HCT116 (cell line): ENCODE measurements at regions of chr1 and their contacts with region 1.

Region 1: GRCh38 chr1:10694633-10695627 is 101.5 kb downstream of the CASZ1 start:
- DNase-seq: peak; percentile 60
- ATAC-seq: peak; percentile 88
- H3K4me3 ChIP-seq: peak overlapping the region in 1 of 2 experiments; percentile 40; a peak in 1 of 4 replicates
- H3K27ac ChIP-seq: no peak overlapping the region; the same call in 1 of the 2 replicates
- H3K4me1 ChIP-seq: peaks cover 14 to 35% of the 10 kb centered on the region in 2 experiments
- H3K27me3 ChIP-seq: no peaks in the 10 kb centered on the region
- CTCF ChIP-seq: no peak
- POLR2A ChIP-seq: no peak
- RAD21 ChIP-seq: no peak

Region 2: GRCh38 chr1:10753299-10753698 is 58.4 kb after region 1 on chr1:
- CTCF ChIA-PET with region 1: no interaction called
- POLR2A ChIA-PET with region 1: no interaction called
- RAD21 ChIA-PET with region 1: no interaction called
- intact Hi-C with region 1: no loop called
- DNase-seq: no peak
- ATAC-seq: peak; percentile 44; the same call in 1 of the 2 replicates
- H3K4me3 ChIP-seq: no peak overlapping the region
- H3K27ac ChIP-seq: no peak overlapping the region
- H3K4me1 ChIP-seq: peaks cover 2 to 9% of the 10 kb centered on the region in 2 experiments; a peak in 2 of 4 replicates
- H3K27me3 ChIP-seq: no peaks in the 10 kb centered on the region
- CTCF ChIP-seq: peak in 1 of 3 experiments; percentile 26; a peak in 1 of 6 replicates
- POLR2A ChIP-seq: no peak
- RAD21 ChIP-seq: no peak

Region 3: GRCh38 chr1:10803971-10804820 is 109.3 kb after region 1 on chr1:
- CTCF ChIA-PET with region 1: no interaction called
- POLR2A ChIA-PET with region 1: no interaction called
- RAD21 ChIA-PET with region 1: no interaction called
- intact Hi-C with region 1: loop called (anchors 5 kb)
- DNase-seq: no peak
- ATAC-seq: peak; percentile 95
- H3K4me3 ChIP-seq: peak overlapping the region; percentile 43 to 50
- H3K27ac ChIP-seq: peak overlapping the region; percentile 73
- H3K4me1 ChIP-seq: peaks cover 9 to 17% of the 10 kb centered on the region in 2 experiments
- H3K27me3 ChIP-seq: peaks cover 7% of the 10 kb centered on the region; the same call in 1 of the 2 replicates
- CTCF ChIP-seq: no peak
- POLR2A ChIP-seq: peak; percentile 56
- RAD21 ChIP-seq: no peak

Region 4: DNA sequence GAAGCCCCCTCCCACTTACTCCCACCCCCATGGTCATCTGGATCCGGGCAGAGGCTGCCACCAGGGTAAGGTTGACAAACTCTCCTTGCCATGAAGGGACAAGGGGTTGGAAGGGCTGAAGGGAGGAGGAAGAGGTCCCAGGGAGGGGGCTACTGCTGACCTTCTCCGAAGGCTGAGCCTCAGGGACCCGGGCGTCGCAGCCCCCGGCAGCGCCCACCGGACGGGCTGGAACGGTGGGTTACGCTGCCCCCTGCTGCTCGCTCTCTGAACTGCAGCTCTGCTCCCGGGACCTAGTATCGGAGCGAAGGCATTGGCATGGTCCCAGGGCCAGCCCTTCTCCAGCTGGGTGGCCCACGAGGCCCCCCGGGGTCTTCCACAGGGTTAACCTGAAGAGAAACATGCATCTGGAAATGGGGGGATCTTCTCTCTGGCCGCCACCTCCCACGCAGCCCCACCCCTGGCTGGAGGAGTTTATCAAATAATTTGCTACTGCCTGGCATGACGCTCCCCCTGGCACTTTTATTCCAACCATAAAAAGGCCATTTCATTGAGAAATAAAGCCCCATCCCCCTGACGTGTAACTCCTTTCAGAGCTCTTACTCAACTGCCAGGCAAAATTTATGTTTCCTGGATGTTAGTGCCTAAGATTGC is 247.1 kb after region 1 on chr1:
- CTCF ChIA-PET with region 1: no interaction called
- POLR2A ChIA-PET with region 1: no interaction called
- RAD21 ChIA-PET with region 1: no interaction called
- intact Hi-C with region 1: loop called (anchors 1 kb)
- DNase-seq: no peak
- ATAC-seq: peak; percentile 83
- H3K4me3 ChIP-seq: 0 out of 4 replicates have a peak overlapping the region, but pooled peaks of 1 of the 2 experiments have one; percentile 26
- H3K27ac ChIP-seq: no peak overlapping the region
- H3K4me1 ChIP-seq: peaks cover 0 to 8% of the 10 kb centered on the region in 2 experiments; a peak in 2 of 4 replicates
- H3K27me3 ChIP-seq: no peaks in the 10 kb centered on the region; the same call in 1 of the 2 replicates
- CTCF ChIP-seq: peak; percentile 71 to 97 (median 91)
- POLR2A ChIP-seq: no peak
- RAD21 ChIP-seq: peak; percentile 86